SK-N-SH (cell line): ENCODE measurements at regions of chr1 and their contacts with region 1.

Region 1: GRCh38 chr1:50023332-50024159 is at the start of gene AGBL4:
- DNase-seq: peak; percentile 93
- H3K4me3 ChIP-seq: peak within 1 kb of the TSS; percentile 67 to 70
- H3K27ac ChIP-seq: peak within 1 kb of the TSS in 1 of 2 experiments; percentile 55; a peak in 1 of 4 replicates
- H3K4me1 ChIP-seq: peaks cover 0 to 15% of the 10 kb centered on the region in 2 experiments; a peak in 1 of 4 replicates
- H3K27me3 ChIP-seq: no peaks in the 10 kb centered on the region
- CTCF ChIP-seq: no peak
- EP300 ChIP-seq: 0 out of 4 replicates have a peak, but pooled peaks of 1 of the 2 experiments have one; percentile 7
- RAD21 ChIP-seq: no peak
- polyA plus RNA-seq, gene AGBL4: 0.07 and 0.15 TPM in 2 replicates

Region 2: GRCh38 chr1:50047916-50048694 is 24.6 kb after region 1 on chr1:
- CTCF ChIA-PET with region 1: interaction called, 28 read pairs
- POLR2A ChIA-PET with region 1: no interaction called
- DNase-seq: peak; percentile 87
- H3K4me3 ChIP-seq: peak overlapping the region; percentile 53 to 61
- H3K27ac ChIP-seq: peak overlapping the region in 1 of 2 experiments; percentile 43; a peak in 1 of 4 replicates
- H3K4me1 ChIP-seq: no peaks in the 10 kb centered on the region; a peak in 1 of 4 replicates
- H3K27me3 ChIP-seq: no peaks in the 10 kb centered on the region; the same call in 1 of the 2 replicates
- CTCF ChIP-seq: peak; percentile 46
- EP300 ChIP-seq: no peak
- RAD21 ChIP-seq: peak; percentile 54

Region 3: DNA sequence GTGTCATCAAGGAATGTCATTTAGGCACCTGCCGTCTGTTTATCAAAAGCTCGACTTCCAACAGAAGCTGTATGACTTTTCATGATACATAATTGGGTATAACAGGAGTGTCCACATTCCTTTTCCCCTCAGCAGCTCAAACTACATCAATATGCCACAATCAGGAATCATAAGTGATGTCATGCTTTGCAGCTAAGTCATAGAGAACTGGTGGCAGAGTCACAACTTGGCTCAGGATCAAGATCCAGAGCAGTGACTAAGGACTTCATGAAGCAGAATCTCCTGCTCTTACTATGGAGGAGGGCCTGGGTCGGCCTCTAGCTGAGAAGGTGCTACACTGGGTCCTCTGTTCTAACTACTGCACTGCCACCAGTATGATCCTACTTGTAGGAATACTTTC is 36.7 kb after region 1 on chr1:
- CTCF ChIA-PET with region 1: no interaction called
- POLR2A ChIA-PET with region 1: no interaction called
- DNase-seq: no peak
- H3K4me3 ChIP-seq: no peak overlapping the region
- H3K27ac ChIP-seq: no peak overlapping the region
- H3K4me1 ChIP-seq: no peaks in the 10 kb centered on the region
- H3K27me3 ChIP-seq: no peaks in the 10 kb centered on the region
- CTCF ChIP-seq: no peak
- EP300 ChIP-seq: no peak
- RAD21 ChIP-seq: no peak

Region 4: DNA sequence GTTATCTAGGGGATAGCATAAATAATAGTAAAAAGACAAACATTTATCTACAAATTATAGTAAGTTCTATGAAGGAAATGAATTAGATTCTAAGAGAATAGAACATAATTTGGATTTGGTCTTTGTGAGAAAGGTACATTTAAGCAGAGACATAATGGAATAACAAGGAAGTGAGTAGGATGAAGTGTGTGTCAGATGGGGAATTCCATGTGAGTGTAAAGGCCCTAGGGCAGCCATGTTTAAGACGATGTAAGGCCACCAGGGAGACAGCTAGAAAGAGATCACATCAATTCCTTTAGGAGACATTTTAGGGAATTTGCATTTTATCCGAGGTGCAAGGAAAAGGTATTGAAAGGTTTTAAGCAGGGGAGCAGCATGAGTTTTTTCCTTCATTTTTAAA is 51.4 kb after region 1 on chr1:
- CTCF ChIA-PET with region 1: no interaction called
- POLR2A ChIA-PET with region 1: no interaction called
- DNase-seq: no peak
- H3K4me3 ChIP-seq: no peak overlapping the region
- H3K27ac ChIP-seq: no peak overlapping the region
- H3K4me1 ChIP-seq: no peaks in the 10 kb centered on the region
- H3K27me3 ChIP-seq: no peaks in the 10 kb centered on the region
- CTCF ChIP-seq: no peak
- EP300 ChIP-seq: no peak
- RAD21 ChIP-seq: no peak